ENCODE measurements at regions of chr1 and their contacts with region 1.

Region 1: GRCh38 chr1:41333146-41333784 is 28.0 kb upstream of the FOXO6 start:
- DNase-seq: no peak
- ATAC-seq: no peak
- H3K4me3 Mint-ChIP-seq: no peak overlapping the region
- H3K27ac Mint-ChIP-seq: no peak overlapping the region
- H3K4me1 Mint-ChIP-seq: peaks cover 11% of the 10 kb centered on the region
- H3K27me3 Mint-ChIP-seq: peaks cover under 1% of the 10 kb centered on the region
- CTCF ChIP-seq: no peak

Region 2: GRCh38 chr1:40849801-40850592 is 483.3 kb before region 1 on chr1:
- CTCF ChIA-PET with region 1: no interaction called
- POLR2A ChIA-PET with region 1: no interaction called
- DNase-seq: peak; percentile 77
- ATAC-seq: peak; percentile 71
- H3K4me3 Mint-ChIP-seq: no peak overlapping the region
- H3K27ac Mint-ChIP-seq: no peak overlapping the region
- H3K4me1 Mint-ChIP-seq: peaks cover 10% of the 10 kb centered on the region
- H3K27me3 Mint-ChIP-seq: no peaks in the 10 kb centered on the region
- CTCF ChIP-seq: peak; percentile 91

Region 3: DNA sequence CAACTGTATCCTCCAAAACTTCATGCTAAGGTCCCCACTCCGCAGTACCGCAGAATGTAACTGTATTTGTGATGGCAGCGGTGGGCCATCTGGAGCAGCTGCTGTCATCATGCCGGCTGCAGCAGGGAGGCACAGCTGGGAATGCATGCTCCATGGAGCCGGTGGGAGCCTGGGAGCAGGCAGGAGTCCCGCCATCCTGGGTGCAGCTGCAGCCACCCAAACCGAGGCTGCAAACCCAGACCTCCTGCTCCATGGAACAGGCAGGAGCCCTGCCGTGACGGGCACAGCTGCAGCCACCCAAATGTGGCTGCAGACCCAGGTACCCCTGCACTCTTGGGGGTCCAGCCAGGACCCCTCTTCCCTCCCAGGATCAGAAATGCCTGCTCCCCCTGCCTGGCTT is 171.4 kb before region 1 on chr1:
- CTCF ChIA-PET with region 1: no interaction called
- POLR2A ChIA-PET with region 1: no interaction called
- DNase-seq: no peak
- ATAC-seq: no peak
- H3K4me3 Mint-ChIP-seq: no peak overlapping the region
- H3K27ac Mint-ChIP-seq: no peak overlapping the region
- H3K4me1 Mint-ChIP-seq: no peaks in the 10 kb centered on the region
- H3K27me3 Mint-ChIP-seq: no peaks in the 10 kb centered on the region
- CTCF ChIP-seq: no peak

Region 4: DNA sequence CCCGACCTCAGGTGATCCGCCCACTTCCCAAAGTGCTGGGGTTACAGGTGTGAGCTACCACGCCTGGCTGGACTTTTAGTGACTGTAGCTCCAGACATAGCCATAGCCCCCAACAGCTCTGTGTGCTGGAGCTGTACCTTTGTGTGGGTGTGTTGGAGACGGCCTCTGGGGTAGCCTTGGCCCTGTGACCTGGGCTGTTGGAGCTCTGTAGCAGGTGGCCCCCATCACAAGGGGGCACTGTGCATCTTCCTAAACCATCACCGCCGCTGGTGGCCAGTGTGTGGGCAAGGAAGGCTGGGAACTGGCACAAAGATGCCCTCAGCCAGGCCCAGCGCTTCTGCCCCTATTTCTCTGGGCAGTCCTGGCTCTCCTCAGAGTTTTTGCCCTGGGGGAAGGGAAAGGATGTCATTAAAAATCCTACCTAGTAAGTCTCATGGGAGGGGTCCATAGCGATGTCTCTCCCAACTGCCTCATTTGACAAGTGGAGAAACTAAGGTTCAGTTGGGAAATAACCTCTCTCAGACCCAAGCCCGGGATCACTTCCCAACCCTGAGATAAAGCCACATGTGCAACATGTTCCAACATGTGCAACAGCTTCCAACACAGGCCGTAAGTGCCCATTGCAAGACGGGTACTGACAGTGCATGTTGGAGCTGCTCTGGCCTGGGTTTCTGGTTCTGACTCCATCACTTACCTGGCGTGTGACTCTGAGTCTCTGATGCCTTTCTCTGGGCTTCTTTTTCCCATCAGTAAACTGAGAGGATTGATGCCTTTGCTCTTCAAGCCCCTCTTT is 10.2 kb before region 1 on chr1:
- CTCF ChIA-PET with region 1: interaction called, 87 read pairs
- POLR2A ChIA-PET with region 1: no interaction called
- DNase-seq: peak; percentile 75
- ATAC-seq: peak; percentile 95
- H3K4me3 Mint-ChIP-seq: no peak overlapping the region
- H3K27ac Mint-ChIP-seq: no peak overlapping the region
- H3K4me1 Mint-ChIP-seq: peaks cover 11% of the 10 kb centered on the region
- H3K27me3 Mint-ChIP-seq: no peaks in the 10 kb centered on the region
- CTCF ChIP-seq: peak; percentile 49

Region 5: GRCh38 chr1:41387667-41388091 is 54.4 kb after region 1 on chr1:
- CTCF ChIA-PET with region 1: interaction called, 10 read pairs
- POLR2A ChIA-PET with region 1: no interaction called
- DNase-seq: peak; percentile 84
- ATAC-seq: peak; percentile 92
- H3K4me3 Mint-ChIP-seq: no peak overlapping the region
- H3K27ac Mint-ChIP-seq: peak overlapping the region; percentile 38
- H3K4me1 Mint-ChIP-seq: peaks cover 46% of the 10 kb centered on the region
- H3K27me3 Mint-ChIP-seq: peaks cover 39% of the 10 kb centered on the region
- CTCF ChIP-seq: no peak

Region 6: DNA sequence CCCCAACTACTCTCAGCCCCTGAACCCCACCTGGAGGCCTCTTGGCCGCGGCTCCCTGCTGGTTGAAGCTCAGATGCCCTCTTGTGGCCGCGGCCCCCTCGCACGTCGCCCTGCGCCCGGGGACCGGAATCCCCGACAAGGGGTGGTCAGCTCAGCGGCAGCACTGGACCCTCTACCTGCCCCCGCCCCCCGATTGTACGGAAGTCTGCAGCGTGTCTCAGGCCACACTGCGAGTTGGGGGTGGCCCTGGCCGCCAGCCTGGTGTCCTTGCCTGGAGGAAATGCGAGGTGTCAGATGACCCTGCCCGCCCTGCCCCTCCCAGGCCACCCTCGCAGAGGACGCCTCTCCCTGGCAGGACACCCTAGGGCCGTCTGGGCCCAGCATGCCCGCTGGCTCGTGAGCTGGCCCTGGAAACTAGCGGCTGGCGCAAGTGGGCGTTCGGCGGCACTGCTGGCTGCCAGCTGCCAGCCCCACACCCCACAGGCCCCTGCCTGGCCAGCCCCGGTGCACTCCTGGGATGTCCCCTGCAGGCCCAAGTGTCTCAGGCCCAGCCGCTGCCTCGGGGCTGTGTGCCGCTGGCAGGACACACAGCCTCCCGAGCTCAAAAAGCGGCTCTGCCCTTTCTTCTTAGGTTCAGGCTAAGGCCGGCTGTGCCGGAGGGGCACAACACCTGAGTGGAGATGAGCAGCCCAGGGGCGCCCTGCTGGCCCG is 90.4 kb after region 1 on chr1:
- CTCF ChIA-PET with region 1: interaction called, 39 read pairs
- POLR2A ChIA-PET with region 1: no interaction called
- DNase-seq: peak; percentile 66
- ATAC-seq: peak; percentile 52
- H3K4me3 Mint-ChIP-seq: no peak overlapping the region
- H3K27ac Mint-ChIP-seq: no peak overlapping the region
- H3K4me1 Mint-ChIP-seq: peaks cover 5% of the 10 kb centered on the region
- H3K27me3 Mint-ChIP-seq: no peaks in the 10 kb centered on the region
- CTCF ChIP-seq: no peak